ENCODE measurements at regions of chr20 and their contacts with region 1.

Region 1: GRCh38 chr20:33638726-33639125 is 23.4 kb upstream of the C20orf144 start:
- DNase-seq: no peak
- H3K4me3 ChIP-seq: no peak overlapping the region
- H3K27ac ChIP-seq: no peak overlapping the region
- H3K27me3 ChIP-seq: no peaks in the 10 kb centered on the region
- CTCF ChIP-seq: no peak

Region 2: GRCh38 chr20:33744773-33745385 is 106.2 kb after region 1 on chr20:
- CTCF ChIA-PET with region 1: no interaction called
- POLR2A ChIA-PET with region 1: interaction called, 20 read pairs
- DNase-seq: no peak
- H3K4me3 ChIP-seq: no peak overlapping the region
- H3K27ac ChIP-seq: no peak overlapping the region
- H3K27me3 ChIP-seq: no peaks in the 10 kb centered on the region
- CTCF ChIP-seq: no peak

Measured in AG04450 (cell line).